Tibial artery (tissue), 4 donors: ENCODE measurements at regions of chr19 and their contacts with region 1.

Region 1: DNA sequence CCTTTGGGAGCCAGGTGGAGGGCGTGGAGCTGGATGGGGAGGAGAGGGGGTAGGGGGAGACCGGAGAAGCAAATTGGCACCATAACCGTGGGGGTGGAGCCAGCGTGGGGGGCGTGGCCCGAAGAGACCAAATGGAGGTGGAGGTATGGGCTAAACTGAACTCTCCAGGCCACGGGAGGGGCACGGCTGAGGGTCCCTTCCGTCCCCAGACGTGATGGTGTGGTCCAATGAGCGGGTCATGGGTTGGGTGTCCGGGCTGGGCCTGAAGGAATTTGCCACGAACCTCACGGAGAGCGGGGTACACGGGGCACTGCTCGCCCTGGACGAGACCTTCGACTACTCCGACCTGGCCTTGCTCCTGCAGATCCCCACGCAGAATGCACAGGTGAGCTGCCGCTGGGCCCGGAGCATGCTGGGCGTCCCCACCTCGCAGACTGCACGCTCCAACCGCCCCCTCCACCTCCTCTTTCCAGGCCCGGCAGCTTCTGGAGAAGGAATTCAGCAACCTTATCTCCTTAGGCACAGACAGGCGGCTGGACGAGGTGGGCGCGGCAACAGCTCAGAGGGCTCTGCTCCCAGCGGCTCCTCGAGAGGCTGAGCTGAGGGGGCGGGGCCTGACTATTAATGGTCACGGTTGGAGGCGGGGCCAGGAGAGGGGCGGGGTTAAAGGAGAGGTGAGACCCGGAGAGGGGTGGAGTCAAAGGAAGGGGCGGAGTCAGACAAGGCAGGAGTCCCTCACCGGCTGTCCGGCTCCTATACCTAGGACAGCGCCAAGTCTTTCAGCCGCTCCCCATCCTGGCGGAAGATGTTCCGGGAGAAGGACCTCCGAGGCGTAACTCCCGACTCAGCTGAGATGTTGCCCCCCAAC is 6.2 kb downstream of the HRC start:
- DNase-seq: peak; percentile 98 to 99
- H3K4me3 ChIP-seq: peak overlapping the region; percentile 73 to 78
- H3K27ac ChIP-seq: peak overlapping the region; percentile 71 to 80
- H3K4me1 ChIP-seq: peaks cover 0 to 49% (median 37%) of the 10 kb centered on the region in 4 donors
- H3K27me3 ChIP-seq: no peaks in the 10 kb centered on the region
- CTCF ChIP-seq: no peak

Region 2: DNA sequence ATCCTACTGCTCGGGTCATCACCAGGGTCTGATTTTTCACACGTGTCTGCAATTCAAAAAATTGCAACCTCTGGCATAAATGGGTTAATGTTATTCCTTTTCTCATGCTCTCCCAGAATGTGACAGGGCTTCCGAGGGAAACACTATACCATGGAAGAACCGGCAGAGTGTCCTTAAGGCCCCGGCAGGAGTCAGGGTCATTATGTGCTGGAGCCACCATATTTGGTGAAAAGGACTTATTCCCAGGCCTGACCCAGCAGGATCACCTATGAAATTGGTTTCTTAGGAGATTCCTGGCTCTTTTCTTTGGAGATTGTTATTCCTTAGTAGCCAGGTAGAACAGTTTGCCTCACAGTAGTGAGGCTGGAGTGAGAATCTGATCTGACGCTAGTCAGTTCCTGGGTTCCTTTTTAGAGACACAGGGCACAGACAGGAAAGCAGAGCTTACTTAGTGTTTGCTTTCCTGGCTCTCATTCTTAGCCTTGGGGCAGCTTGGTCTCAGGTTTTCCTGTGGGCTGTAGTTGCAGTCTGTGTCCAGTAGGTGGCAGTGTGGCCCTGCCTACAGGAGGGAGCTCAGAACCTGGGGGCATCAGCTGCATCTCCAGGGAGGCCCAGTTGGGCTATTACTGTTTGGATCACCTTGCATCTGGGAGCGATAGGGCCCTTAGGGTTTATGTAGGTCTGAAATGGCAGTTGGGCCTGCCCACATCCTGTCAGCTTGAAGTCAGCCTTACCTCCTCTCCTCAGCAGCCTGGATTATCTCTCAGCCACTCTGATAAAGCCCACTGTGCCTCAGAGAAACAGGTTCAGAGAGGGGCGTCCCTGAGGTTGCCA is 51.3 kb before region 1 on chr19:
- intact Hi-C with region 1: loop called (anchors 5 kb)
- DNase-seq: peak; percentile 52 to 79
- H3K4me3 ChIP-seq: no peak overlapping the region
- H3K27ac ChIP-seq: no peak overlapping the region
- H3K4me1 ChIP-seq: peaks cover 0 to 7% (median 0%) of the 10 kb centered on the region in 4 donors
- H3K27me3 ChIP-seq: no peaks in the 10 kb centered on the region
- CTCF ChIP-seq: peak; percentile 97 to 99

Region 3: GRCh38 chr19:49118565-49119410 is 30.2 kb before region 1 on chr19 and contains the start of gene C19orf73:
- intact Hi-C with region 1: loop called (anchors 5 kb)
- DNase-seq: peak; percentile 91 to 97
- H3K4me3 ChIP-seq: peak within 1 kb of the TSS; percentile 57 to 85
- H3K27ac ChIP-seq: peak within 1 kb of the TSS; percentile 85 to 92
- H3K4me1 ChIP-seq: peaks cover 7 to 40% (median 28%) of the 10 kb centered on the region in 4 donors
- H3K27me3 ChIP-seq: peaks cover 0 to 3% of the 10 kb centered on the region in 2 donors
- CTCF ChIP-seq: peak in 1 of 2 experiments; percentile 22

Region 4: DNA sequence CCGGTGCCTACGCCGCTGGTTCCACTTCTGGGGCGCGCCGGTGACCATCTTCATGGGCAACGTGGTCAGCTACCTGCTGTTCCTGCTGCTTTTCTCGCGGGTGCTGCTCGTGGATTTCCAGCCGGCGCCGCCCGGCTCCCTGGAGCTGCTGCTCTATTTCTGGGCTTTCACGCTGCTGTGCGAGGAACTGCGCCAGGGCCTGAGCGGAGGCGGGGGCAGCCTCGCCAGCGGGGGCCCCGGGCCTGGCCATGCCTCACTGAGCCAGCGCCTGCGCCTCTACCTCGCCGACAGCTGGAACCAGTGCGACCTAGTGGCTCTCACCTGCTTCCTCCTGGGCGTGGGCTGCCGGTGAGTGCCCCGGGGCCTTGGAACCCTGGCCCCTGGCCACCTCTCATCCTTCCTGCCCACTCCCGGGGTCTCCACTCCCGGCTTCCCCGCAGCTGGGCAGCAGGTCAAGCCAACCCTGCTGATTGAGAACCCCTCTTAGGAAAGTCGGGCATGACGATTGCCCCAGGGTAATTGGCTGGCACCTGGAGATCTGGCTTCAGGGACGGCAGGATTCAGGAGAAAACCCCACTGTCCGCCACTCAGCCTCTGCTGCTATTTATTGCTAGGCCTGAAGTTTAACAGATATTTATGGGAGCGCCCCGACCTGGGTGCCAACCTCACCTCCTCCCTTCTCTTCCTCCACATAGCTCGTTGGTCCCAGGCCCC is 47.7 kb after region 1 on chr19:
- intact Hi-C with region 1: loop called (anchors 5 kb)
- DNase-seq: peak in 1 of 2 donors; percentile 73
- H3K4me3 ChIP-seq: peak overlapping the region; percentile 19 to 31
- H3K27ac ChIP-seq: peak overlapping the region; percentile 2 to 61
- H3K4me1 ChIP-seq: peaks cover 0 to 11% (median 5%) of the 10 kb centered on the region in 4 donors
- H3K27me3 ChIP-seq: no peaks in the 10 kb centered on the region
- CTCF ChIP-seq: no peak